Activated naive CD4-positive, alpha-beta T cell treated with anti-CD3 and anti-CD28 coated beads for 36 hours (primary cell): ENCODE measurements at regions of chr16 and their contacts with region 1.

Region 1: GRCh38 chr16:9008601-9009260 is 45.0 kb upstream of the USP7 start:
- DNase-seq: peak; percentile 78
- H3K4me3 Mint-ChIP-seq: no peak overlapping the region
- H3K27ac Mint-ChIP-seq: no peak overlapping the region
- H3K4me1 Mint-ChIP-seq: peaks cover 4% of the 10 kb centered on the region
- H3K27me3 Mint-ChIP-seq: peaks cover 9% of the 10 kb centered on the region

Region 2: DNA sequence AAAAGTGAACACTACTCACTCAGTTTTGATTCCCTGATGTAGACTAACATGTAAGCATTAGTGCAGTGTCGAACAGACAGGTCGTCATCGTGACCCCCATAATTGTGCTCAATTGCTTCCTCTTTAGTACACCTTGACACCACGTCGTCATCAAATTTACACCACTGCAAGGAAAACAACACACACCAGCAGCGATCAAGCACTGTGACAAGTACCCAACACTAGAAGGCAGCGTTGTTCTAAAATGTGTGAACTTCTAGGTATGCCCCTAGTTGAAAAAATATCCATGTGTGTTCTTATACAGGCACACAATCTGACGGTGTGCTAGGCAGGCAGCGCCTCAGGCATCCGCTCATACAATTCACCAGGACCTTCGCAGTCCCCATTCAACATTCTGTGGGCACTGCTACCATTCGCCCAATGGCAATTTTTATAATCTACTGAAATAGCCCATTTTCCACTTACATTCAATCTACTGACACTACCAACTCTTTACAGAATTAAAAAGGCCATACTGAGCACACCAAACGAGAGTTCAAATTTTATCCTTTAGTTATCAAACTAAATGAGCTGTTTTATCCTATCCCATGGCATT is 103.5 kb before region 1 on chr16:
- CTCF ChIA-PET with region 1: interaction called, 11 read pairs
- intact Hi-C with region 1: loop called (anchors 5 kb)
- DNase-seq: peak; percentile 26
- H3K4me3 Mint-ChIP-seq: no peak overlapping the region
- H3K27ac Mint-ChIP-seq: no peak overlapping the region
- H3K4me1 Mint-ChIP-seq: peaks cover 14% of the 10 kb centered on the region
- H3K27me3 Mint-ChIP-seq: no peaks in the 10 kb centered on the region

Region 3: DNA sequence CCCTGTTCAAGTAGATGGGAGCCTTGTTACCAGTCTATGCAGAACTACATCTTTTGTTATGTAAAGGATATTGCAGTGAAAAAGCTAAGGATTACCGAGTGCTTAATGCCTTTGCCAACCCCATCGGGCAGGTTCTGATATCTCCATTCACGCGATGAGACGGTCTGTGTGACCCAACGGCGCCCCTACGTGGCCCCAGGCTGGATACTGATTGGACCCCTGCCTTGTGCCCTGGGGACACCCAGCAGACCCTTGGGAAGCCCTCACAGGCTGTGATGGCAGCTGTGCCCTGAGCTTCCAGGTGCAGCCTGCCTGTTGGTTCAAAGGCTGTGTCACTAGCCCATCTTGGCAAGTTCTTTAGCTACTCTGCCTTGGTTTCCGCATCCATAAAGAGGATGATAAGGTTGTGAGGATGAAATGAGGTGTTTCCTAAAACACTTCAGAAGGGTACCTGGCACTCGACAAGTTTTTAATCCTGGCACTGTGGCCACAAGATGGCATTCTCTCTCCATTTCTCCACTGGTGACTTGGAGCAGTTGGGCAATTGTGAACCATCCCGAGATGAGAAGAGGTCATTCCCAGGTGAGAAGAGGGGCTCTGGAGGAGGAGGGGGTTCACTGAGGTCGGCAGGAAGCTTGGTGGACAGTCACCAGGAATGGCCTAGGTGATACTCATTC is 116.3 kb after region 1 on chr16:
- CTCF ChIA-PET with region 1: interaction called, 19 read pairs
- intact Hi-C with region 1: loop called (anchors 5 kb)
- DNase-seq: no peak
- H3K4me3 Mint-ChIP-seq: no peak overlapping the region
- H3K27ac Mint-ChIP-seq: peak overlapping the region; percentile 64
- H3K4me1 Mint-ChIP-seq: peaks cover 61% of the 10 kb centered on the region
- H3K27me3 Mint-ChIP-seq: no peaks in the 10 kb centered on the region